CD4-positive, alpha-beta T cell (primary cell): ENCODE measurements at regions of chr5 and their contacts with region 1.

Region 1: GRCh38 chr5:142201471-142201887 is 92.9 kb downstream of the NDFIP1 start:
- DNase-seq: no peak
- ATAC-seq: no peak
- H3K4me3 ChIP-seq: no peak overlapping the region
- H3K4me3 Mint-ChIP-seq: no peak overlapping the region
- H3K27ac ChIP-seq: no peak overlapping the region
- H3K27ac Mint-ChIP-seq: no peak overlapping the region
- H3K4me1 ChIP-seq: no peaks in the 10 kb centered on the region
- H3K4me1 Mint-ChIP-seq: no peaks in the 10 kb centered on the region
- H3K27me3 ChIP-seq: no peaks in the 10 kb centered on the region
- H3K27me3 Mint-ChIP-seq: no peaks in the 10 kb centered on the region
- CTCF ChIP-seq: no peak

Region 2: DNA sequence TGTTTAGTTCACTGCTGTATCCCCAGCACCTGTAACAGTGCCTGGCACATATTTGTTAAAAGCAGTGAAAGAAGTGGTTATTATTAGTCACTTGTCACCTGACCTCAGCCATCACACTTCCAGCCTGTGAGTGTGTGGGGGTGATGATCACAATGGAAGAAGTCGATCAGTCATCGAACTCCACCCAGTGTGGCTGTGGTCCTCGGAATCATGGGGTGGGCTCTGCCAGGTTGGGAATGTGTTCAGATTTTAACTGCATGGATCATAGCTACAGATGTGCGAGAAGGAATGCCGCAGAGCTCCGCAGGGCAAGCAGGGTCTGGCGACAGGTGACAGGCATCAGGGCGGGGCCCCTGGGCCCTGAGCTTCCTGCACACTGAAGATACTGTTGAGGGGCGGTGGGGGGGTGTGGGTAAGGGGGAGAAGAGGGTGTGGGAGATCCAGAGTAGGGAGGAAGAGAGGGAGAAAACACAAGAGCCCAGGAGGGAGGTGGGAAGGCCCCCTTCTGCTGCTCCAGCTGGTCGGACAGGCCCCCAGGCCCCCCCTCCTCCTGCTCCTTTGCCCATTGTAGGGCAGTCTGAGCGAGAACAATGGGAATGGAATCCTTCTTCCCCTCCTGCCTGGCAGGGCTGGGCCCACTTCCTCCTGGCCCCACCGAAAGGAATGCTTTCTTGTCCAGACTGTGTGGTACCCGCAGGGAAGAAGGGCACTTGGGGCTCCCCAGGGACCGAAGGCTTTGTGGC is 33.7 kb after region 1 on chr5:
- CTCF ChIA-PET with region 1: no interaction called
- POLR2A ChIA-PET with region 1: no interaction called
- intact Hi-C with region 1: no loop called
- DNase-seq: no peak
- ATAC-seq: no peak
- H3K4me3 ChIP-seq: no peak overlapping the region
- H3K4me3 Mint-ChIP-seq: no peak overlapping the region
- H3K27ac ChIP-seq: no peak overlapping the region
- H3K27ac Mint-ChIP-seq: no peak overlapping the region
- H3K4me1 ChIP-seq: no peaks in the 10 kb centered on the region
- H3K4me1 Mint-ChIP-seq: peaks cover 6% of the 10 kb centered on the region
- H3K27me3 ChIP-seq: peaks cover 0 to 2% of the 10 kb centered on the region in 2 experiments
- H3K27me3 Mint-ChIP-seq: peaks cover 7% of the 10 kb centered on the region
- CTCF ChIP-seq: no peak

Region 3: GRCh38 chr5:142246258-142246657 is 44.8 kb after region 1 on chr5:
- CTCF ChIA-PET with region 1: no interaction called
- POLR2A ChIA-PET with region 1: no interaction called
- intact Hi-C with region 1: no loop called
- DNase-seq: no peak
- ATAC-seq: no peak
- H3K4me3 ChIP-seq: no peak overlapping the region
- H3K4me3 Mint-ChIP-seq: no peak overlapping the region
- H3K27ac ChIP-seq: no peak overlapping the region
- H3K27ac Mint-ChIP-seq: no peak overlapping the region
- H3K4me1 ChIP-seq: no peaks in the 10 kb centered on the region
- H3K4me1 Mint-ChIP-seq: no peaks in the 10 kb centered on the region
- H3K27me3 ChIP-seq: peaks cover 0 to 3% of the 10 kb centered on the region in 2 experiments
- H3K27me3 Mint-ChIP-seq: no peaks in the 10 kb centered on the region
- CTCF ChIP-seq: no peak

Region 4: GRCh38 chr5:142342128-142342981 is 140.9 kb after region 1 on chr5:
- CTCF ChIA-PET with region 1: no interaction called
- POLR2A ChIA-PET with region 1: interaction called, 4 read pairs
- intact Hi-C with region 1: loop called in 1 of 2 experiments (anchors 5 kb)
- DNase-seq: no peak
- ATAC-seq: no peak
- H3K4me3 ChIP-seq: no peak overlapping the region
- H3K4me3 Mint-ChIP-seq: no peak overlapping the region
- H3K27ac ChIP-seq: no peak overlapping the region
- H3K27ac Mint-ChIP-seq: no peak overlapping the region
- H3K4me1 ChIP-seq: no peaks in the 10 kb centered on the region
- H3K4me1 Mint-ChIP-seq: no peaks in the 10 kb centered on the region
- H3K27me3 ChIP-seq: peaks cover 0 to 2% of the 10 kb centered on the region in 2 experiments
- H3K27me3 Mint-ChIP-seq: no peaks in the 10 kb centered on the region
- CTCF ChIP-seq: no peak